AG04450 (cell line): ENCODE measurements at regions of chr11 and their contacts with region 1.

Region 1: DNA sequence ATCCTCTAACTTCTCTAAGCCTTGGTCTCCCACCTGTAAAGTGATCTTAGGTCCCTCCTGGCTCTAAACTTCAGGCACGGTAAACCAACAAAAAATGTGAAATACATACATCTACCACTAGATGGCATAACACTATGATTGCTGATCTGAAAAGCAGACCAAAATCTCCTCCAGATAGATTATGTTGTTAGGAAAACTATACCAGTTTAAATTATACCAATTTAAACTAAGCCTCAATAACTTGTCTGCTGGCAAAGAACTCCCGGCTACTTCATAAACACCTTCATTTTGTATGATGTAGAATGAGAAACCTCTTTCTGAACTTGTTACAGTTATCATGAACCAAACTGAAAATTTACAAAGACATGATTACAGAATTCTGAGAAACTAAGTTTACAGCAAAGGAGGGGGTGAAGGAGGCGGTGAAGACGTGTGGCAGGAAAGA is 85.9 kb downstream of the SBF2 start:
- DNase-seq: no peak
- H3K4me3 ChIP-seq: no peak overlapping the region
- H3K27ac ChIP-seq: no peak overlapping the region
- H3K27me3 ChIP-seq: no peaks in the 10 kb centered on the region
- CTCF ChIP-seq: peak; percentile 74

Region 2: GRCh38 chr11:10192036-10192435 is 16.1 kb before region 1 on chr11:
- CTCF ChIA-PET with region 1: interaction called, 27 read pairs
- POLR2A ChIA-PET with region 1: no interaction called
- DNase-seq: no peak
- H3K4me3 ChIP-seq: no peak overlapping the region
- H3K27ac ChIP-seq: no peak overlapping the region
- H3K27me3 ChIP-seq: no peaks in the 10 kb centered on the region
- CTCF ChIP-seq: no peak

Region 3: GRCh38 chr11:10197091-10197490 is 11.1 kb before region 1 on chr11:
- CTCF ChIA-PET with region 1: interaction called, 27 read pairs
- POLR2A ChIA-PET with region 1: no interaction called
- DNase-seq: no peak
- H3K4me3 ChIP-seq: no peak overlapping the region
- H3K27ac ChIP-seq: no peak overlapping the region
- H3K27me3 ChIP-seq: no peaks in the 10 kb centered on the region
- CTCF ChIP-seq: no peak

Region 4: DNA sequence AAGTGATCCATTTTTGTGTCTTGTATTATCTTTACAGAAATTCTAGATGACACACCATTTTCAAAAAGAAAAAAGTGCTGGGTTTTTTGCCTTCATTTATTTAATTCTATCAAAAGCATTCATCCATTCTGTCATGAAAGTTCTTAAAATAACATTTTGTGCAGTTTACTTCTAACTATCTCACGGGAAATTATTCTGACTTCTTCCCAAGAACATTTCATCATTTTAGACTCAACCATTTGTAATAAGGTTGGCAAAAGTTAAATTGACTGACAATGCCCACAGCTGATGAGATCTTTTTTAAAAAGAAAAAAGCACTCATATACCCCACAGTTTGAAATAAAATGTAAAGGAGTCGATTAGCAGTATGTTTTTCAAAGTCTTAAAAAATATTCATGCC is 17.4 kb after region 1 on chr11:
- CTCF ChIA-PET with region 1: interaction called, 29 read pairs
- POLR2A ChIA-PET with region 1: no interaction called
- DNase-seq: no peak
- H3K4me3 ChIP-seq: no peak overlapping the region
- H3K27ac ChIP-seq: no peak overlapping the region
- H3K27me3 ChIP-seq: no peaks in the 10 kb centered on the region
- CTCF ChIP-seq: no peak

Region 5: GRCh38 chr11:10255388-10256125 is 47.4 kb after region 1 on chr11:
- CTCF ChIA-PET with region 1: interaction called, 20 read pairs
- POLR2A ChIA-PET with region 1: no interaction called
- DNase-seq: no peak
- H3K4me3 ChIP-seq: no peak overlapping the region
- H3K27ac ChIP-seq: no peak overlapping the region
- H3K27me3 ChIP-seq: no peaks in the 10 kb centered on the region
- CTCF ChIP-seq: no peak

Region 6: GRCh38 chr11:10331548-10332289 is 123.6 kb after region 1 on chr11:
- CTCF ChIA-PET with region 1: no interaction called
- POLR2A ChIA-PET with region 1: no interaction called
- DNase-seq: no peak
- H3K4me3 ChIP-seq: no peak overlapping the region
- H3K27ac ChIP-seq: no peak overlapping the region
- H3K27me3 ChIP-seq: no peaks in the 10 kb centered on the region
- CTCF ChIP-seq: no peak